ENCODE measurements at regions of chr3 and their contacts with region 1.

Region 1: DNA sequence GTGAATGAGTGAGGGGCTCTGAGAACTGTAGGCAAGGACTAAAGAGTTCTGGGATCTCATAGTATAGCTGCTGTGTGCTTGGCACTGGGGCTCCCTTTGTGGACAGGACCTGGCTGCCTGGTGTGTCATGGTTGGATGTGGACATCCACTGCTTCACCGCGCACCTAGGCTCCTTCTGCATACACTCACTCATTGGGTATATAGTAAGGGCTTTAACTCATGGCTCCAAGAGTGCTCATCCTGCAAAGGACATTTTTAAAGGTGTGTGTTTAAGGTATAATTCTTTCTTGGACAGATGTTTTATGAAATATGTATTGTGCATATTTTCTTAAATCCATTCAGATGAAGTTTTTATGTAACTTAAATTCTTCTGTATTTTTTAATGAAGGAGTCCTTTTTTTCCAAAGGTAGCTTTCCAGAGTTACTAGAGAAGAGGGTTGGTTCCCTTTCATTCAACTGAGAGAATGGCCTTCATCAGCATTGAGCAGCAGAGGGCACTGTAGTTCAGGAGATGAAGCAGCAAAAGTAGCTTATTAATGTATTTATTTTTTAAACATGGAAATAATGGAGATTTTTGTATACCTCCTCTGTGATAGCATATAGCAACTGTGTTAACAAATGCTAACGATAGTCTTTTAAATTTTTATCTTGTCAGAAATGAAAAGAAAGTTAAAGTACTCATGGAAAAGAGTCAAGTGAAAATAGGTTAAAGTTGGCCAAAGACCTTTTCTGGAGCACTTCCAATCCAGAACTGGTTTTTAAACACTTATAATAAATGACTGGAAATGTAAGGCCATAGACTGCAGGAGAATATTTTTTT is 25.2 kb downstream of the OXNAD1 start:
- DNase-seq: peak in 4 of 5 donors; percentile 32 to 51 (median 42)
- ATAC-seq: peak in 1 of 4 donors; percentile 30
- H3K4me3 ChIP-seq: peak overlapping the region in 1 of 12 donors; percentile 2
- H3K27ac ChIP-seq: peak overlapping the region in 10 of 12 donors; percentile 12 to 88 (median 62)
- H3K4me1 ChIP-seq: peaks cover 3 to 75% (median 53%) of the 10 kb centered on the region in 12 donors
- H3K27me3 ChIP-seq: no peaks in the 10 kb centered on the region
- CTCF ChIP-seq: peak; percentile 49 to 92 (median 86)
- POLR2A ChIP-seq: no peak

Region 2: GRCh38 chr3:16370872-16371740 is 80.9 kb after region 1 on chr3:
- intact Hi-C with region 1: loop called in 1 of 10 experiments (anchors 5 kb)
- DNase-seq: peak in 2 of 5 donors; percentile 45 to 57
- ATAC-seq: peak; percentile 17 to 53 (median 48)
- H3K4me3 ChIP-seq: no peak overlapping the region
- H3K27ac ChIP-seq: peak overlapping the region in 11 of 12 donors; percentile 50 to 78 (median 70)
- H3K4me1 ChIP-seq: peaks cover 27 to 91% (median 67%) of the 10 kb centered on the region in 12 donors
- H3K27me3 ChIP-seq: no peaks in the 10 kb centered on the region
- CTCF ChIP-seq: no peak
- POLR2A ChIP-seq: no peak

Region 3: DNA sequence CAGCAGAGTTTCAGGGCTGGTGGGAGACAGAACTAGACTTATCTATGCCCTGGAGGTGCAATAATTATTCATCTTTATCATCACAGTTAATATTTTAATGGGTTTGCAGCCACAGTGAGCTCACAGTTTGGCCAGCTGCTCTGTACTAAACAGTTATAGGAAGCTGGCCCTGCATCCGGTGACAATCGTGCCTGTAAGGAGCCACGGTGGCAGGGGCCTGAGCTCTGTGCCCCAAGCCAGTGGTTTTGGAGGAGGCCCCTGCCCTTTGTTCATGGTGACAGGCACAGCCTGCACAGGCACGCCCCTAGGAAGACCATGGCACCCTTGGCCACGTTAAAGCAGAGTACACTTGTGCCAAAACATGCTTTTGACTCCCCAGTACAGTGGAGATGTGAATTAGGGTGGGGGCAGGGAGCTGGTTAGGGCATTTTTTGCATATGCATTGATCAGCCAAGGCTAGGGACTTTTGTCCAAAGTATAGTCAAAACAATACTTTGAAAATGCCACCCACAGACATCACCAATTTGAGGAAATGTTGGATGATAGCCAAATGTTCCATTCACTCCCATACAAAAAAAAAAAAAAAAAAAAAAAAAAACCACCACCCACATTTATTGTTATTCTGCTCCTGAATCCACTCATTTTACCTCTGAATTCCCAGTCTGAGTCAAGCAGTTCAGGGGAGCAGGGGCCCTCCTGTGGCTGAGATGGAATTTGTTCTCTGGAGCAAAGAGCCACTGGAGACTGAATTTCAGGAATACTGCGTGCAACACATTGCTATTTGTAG is 226.7 kb after region 1 on chr3:
- intact Hi-C with region 1: loop called (anchors 1 to 10 kb)
- DNase-seq: peak in 4 of 5 donors; percentile 40 to 61 (median 44)
- ATAC-seq: peak; percentile 23 to 49 (median 35)
- H3K4me3 ChIP-seq: no peak overlapping the region
- H3K27ac ChIP-seq: peak overlapping the region; percentile 8 to 91 (median 65)
- H3K4me1 ChIP-seq: peaks cover 3 to 55% (median 25%) of the 10 kb centered on the region in 12 donors
- H3K27me3 ChIP-seq: no peaks in the 10 kb centered on the region
- CTCF ChIP-seq: peak; percentile 24 to 69 (median 60)
- POLR2A ChIP-seq: no peak

Region 4: DNA sequence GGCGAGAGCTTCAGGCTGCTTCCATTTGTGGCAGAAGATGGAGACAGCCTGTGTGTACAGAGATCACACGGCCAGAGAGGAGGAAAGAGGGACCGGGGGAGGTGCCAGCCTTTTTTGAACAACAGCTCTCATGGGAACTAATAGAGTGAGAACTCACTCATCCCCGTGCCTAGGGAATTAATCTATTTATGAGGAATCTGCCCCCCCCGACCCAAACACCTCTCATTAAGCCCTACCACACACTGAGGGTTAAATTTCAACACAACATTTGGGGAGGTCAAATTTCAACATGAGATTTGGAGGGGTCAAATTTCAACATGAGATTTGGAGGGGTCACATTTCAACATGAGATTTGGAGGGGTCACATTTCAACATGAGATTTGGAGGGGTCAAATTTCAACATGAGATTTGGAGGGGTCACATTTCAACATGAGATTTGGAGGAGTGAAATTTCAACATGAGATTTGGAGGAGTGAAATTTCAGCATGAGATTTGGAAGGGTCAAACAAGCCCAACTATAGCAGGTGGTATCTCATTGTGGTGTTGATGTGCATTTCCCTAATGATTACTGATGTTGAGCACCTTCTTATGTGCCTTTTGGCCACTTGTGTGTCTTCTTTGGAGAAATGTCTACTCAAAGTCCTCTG is 243.8 kb after region 1 on chr3:
- intact Hi-C with region 1: loop called in 1 of 10 experiments (anchors 5 kb)
- DNase-seq: no peak
- ATAC-seq: no peak
- H3K4me3 ChIP-seq: no peak overlapping the region
- H3K27ac ChIP-seq: no peak overlapping the region
- H3K4me1 ChIP-seq: peaks cover 0 to 6% (median under 1%) of the 10 kb centered on the region in 12 donors
- H3K27me3 ChIP-seq: no peaks in the 10 kb centered on the region
- CTCF ChIP-seq: no peak
- POLR2A ChIP-seq: no peak